BJ (cell line): ENCODE measurements at regions of chr1 and their contacts with region 1.

Region 1: GRCh38 chr1:35715568-35716002 is 3.1 kb downstream of the C1orf216 start:
- DNase-seq: no peak
- H3K4me3 ChIP-seq: no peak overlapping the region
- H3K27me3 ChIP-seq: no peaks in the 10 kb centered on the region
- CTCF ChIP-seq: peak; percentile 94

Region 2: GRCh38 chr1:35451125-35451528 is 264.5 kb before region 1 on chr1:
- CTCF ChIA-PET with region 1: interaction called, 13 read pairs
- POLR2A ChIA-PET with region 1: no interaction called
- DNase-seq: no peak
- H3K4me3 ChIP-seq: no peak overlapping the region
- H3K27me3 ChIP-seq: no peaks in the 10 kb centered on the region
- CTCF ChIP-seq: peak; percentile 87

Region 3: GRCh38 chr1:35564037-35564883 is 151.3 kb before region 1 on chr1:
- CTCF ChIA-PET with region 1: interaction called, 13 read pairs
- POLR2A ChIA-PET with region 1: interaction called, 3 read pairs
- DNase-seq: no peak
- H3K4me3 ChIP-seq: no peak overlapping the region
- H3K27me3 ChIP-seq: no peaks in the 10 kb centered on the region
- CTCF ChIP-seq: peak; percentile 86

Region 4: GRCh38 chr1:35573198-35574090 is 142.1 kb before region 1 on chr1 and contains the start of gene TFAP2E:
- CTCF ChIA-PET with region 1: interaction called, 23 read pairs
- POLR2A ChIA-PET with region 1: no interaction called
- DNase-seq: no peak
- H3K4me3 ChIP-seq: peak within 1 kb of the TSS; percentile 55
- H3K27me3 ChIP-seq: peaks cover 2% of the 10 kb centered on the region; the same call in 1 of the 2 replicates
- CTCF ChIP-seq: no peak
- polyA plus RNA-seq, gene TFAP2E: 0.07 and 0.13 TPM in 2 replicates

Region 5: GRCh38 chr1:35691080-35691479 is 24.5 kb before region 1 on chr1:
- CTCF ChIA-PET with region 1: interaction called, 15 read pairs
- POLR2A ChIA-PET with region 1: no interaction called
- DNase-seq: no peak
- H3K4me3 ChIP-seq: no peak overlapping the region
- H3K27me3 ChIP-seq: peaks cover 10% of the 10 kb centered on the region
- CTCF ChIP-seq: no peak

Region 6: DNA sequence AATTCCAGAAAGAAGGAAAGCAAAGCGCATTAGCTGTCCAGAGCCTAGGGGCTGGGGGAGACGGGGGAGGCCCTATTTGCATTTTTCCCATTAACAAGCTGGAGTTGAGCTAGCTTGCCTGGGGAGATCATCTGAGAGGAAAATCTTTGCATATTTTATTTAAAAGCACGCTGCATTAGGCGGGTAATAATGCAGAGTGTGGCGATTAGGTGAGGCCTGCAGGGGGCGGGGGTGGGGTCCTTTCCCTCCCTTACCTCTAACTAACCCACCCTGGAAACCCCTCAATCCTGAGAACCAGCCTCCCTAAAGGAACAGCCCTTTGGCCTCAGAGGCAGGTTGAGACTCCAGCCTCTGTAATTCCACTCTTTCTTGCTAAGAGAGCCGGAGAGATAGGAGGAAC is 13.1 kb before region 1 on chr1:
- CTCF ChIA-PET with region 1: interaction called, 15 read pairs
- POLR2A ChIA-PET with region 1: no interaction called
- DNase-seq: no peak
- H3K4me3 ChIP-seq: no peak overlapping the region
- H3K27me3 ChIP-seq: peaks cover 23% of the 10 kb centered on the region
- CTCF ChIP-seq: no peak

Region 7: GRCh38 chr1:35769188-35769758 is 53.7 kb after region 1 on chr1:
- CTCF ChIA-PET with region 1: interaction called, 13 read pairs
- POLR2A ChIA-PET with region 1: no interaction called
- DNase-seq: peak; percentile 40
- H3K4me3 ChIP-seq: peak overlapping the region; percentile 58
- H3K27me3 ChIP-seq: no peaks in the 10 kb centered on the region
- CTCF ChIP-seq: peak; percentile 40; the same call in 1 of the 2 replicates

Region 8: GRCh38 chr1:35857830-35858229 is 142.2 kb after region 1 on chr1:
- CTCF ChIA-PET with region 1: no interaction called
- POLR2A ChIA-PET with region 1: no interaction called
- DNase-seq: no peak
- H3K4me3 ChIP-seq: no peak overlapping the region
- H3K27me3 ChIP-seq: no peaks in the 10 kb centered on the region
- CTCF ChIP-seq: peak; percentile 18; the same call in 1 of the 2 replicates